CD8-positive, alpha-beta memory T cell (primary cell): ENCODE measurements at regions of chr4 and their contacts with region 1.

Region 1: GRCh38 chr4:1746265-1746691 is 25.0 kb downstream of the TACC3 start:
- DNase-seq: peak; percentile 60 to 80 (median 68)
- H3K4me3 ChIP-seq: no peak overlapping the region
- H3K4me3 Mint-ChIP-seq: no peak overlapping the region
- H3K27ac ChIP-seq: no peak overlapping the region
- H3K27ac Mint-ChIP-seq: no peak overlapping the region
- H3K4me1 ChIP-seq: no peaks in the 10 kb centered on the region
- H3K4me1 Mint-ChIP-seq: peaks cover 0 to 3% (median 0%) of the 10 kb centered on the region in 3 donors
- H3K27me3 ChIP-seq: no peaks in the 10 kb centered on the region
- H3K27me3 Mint-ChIP-seq: peaks cover 0 to 1% of the 10 kb centered on the region in 2 donors

Region 2: DNA sequence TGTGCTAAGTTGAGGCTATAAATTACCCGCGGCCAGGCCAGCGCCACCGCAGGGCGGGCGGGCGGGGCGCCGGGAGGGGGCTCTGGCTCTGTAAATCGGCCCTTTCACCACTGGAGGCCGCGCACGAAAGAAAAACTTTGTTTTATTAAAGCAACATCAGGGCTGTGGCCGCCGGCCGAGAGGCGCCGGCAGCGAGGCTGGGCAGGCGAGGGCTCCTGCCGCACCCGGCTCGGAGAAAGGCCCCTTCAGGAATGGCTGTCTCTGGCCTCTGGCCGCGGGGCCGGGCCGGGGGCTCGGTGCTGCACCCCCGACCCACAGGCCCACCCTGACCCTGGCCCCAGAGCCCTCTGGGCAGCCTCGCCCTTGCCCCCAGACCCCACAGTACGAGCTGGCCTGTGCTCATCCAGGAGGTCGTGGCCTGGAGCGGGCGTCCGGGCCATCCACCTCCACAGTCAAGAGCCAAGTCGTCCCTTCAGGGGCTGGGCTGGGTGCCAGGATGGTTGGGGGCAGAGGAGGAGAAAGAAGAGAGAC is 17.3 kb after region 1 on chr4:
- CTCF ChIA-PET with region 1: no interaction called
- POLR2A ChIA-PET with region 1: no interaction called
- DNase-seq: no peak
- H3K4me3 ChIP-seq: no peak overlapping the region
- H3K4me3 Mint-ChIP-seq: no peak overlapping the region
- H3K27ac ChIP-seq: no peak overlapping the region
- H3K27ac Mint-ChIP-seq: no peak overlapping the region
- H3K4me1 ChIP-seq: no peaks in the 10 kb centered on the region
- H3K4me1 Mint-ChIP-seq: peaks cover 0 to 11% (median 2%) of the 10 kb centered on the region in 3 donors
- H3K27me3 ChIP-seq: no peaks in the 10 kb centered on the region
- H3K27me3 Mint-ChIP-seq: peaks cover 4 to 18% of the 10 kb centered on the region in 2 donors

Region 3: DNA sequence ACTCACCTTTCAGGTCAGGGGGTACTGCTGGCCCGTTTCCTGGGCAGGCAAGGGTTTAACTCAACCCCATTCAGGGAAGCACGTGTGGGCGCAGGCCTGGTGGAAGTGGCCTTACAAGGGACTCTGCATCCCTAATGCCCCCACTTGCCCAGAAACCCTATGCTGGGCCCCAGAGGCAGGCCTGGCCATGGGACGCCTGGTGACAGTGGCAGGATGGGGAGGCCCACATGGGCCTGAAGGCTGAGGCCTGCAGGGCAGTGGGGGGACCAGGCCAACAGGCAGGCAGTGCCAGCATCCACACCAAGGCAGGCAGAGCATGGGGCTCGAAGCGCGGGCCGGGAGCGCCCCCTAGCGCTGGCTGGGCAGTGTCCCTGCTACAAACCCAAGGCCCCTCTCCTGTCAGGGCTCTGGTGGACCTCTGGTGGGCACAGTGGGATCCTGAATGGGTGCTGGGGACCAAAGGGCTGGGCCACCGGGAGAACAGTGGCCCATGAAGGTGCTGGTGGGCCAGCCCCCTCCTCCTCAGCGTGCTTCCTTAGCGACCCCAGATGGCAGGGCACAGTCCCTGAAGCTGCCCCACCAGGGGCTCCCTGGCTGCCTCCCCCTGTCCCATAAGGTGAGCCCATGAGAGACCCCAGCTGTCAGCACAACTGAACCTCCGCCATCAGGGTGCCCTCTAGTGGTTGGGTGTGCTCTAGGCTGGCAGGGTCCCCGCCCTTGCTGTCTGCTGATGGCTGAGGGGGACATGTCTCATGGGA is 63.7 kb after region 1 on chr4:
- CTCF ChIA-PET with region 1: interaction called, 18 read pairs
- POLR2A ChIA-PET with region 1: no interaction called
- DNase-seq: peak; percentile 39 to 64 (median 51)
- H3K4me3 ChIP-seq: no peak overlapping the region
- H3K4me3 Mint-ChIP-seq: no peak overlapping the region
- H3K27ac ChIP-seq: no peak overlapping the region
- H3K27ac Mint-ChIP-seq: no peak overlapping the region
- H3K4me1 ChIP-seq: no peaks in the 10 kb centered on the region
- H3K4me1 Mint-ChIP-seq: no peaks in the 10 kb centered on the region
- H3K27me3 ChIP-seq: no peaks in the 10 kb centered on the region
- H3K27me3 Mint-ChIP-seq: no peaks in the 10 kb centered on the region